Activated CD4-positive, alpha-beta T cell treated with anti-CD3 and anti-CD28 coated beads for 36 hours (primary cell): ENCODE measurements at regions of chr9 and their contacts with region 1.

Region 1: DNA sequence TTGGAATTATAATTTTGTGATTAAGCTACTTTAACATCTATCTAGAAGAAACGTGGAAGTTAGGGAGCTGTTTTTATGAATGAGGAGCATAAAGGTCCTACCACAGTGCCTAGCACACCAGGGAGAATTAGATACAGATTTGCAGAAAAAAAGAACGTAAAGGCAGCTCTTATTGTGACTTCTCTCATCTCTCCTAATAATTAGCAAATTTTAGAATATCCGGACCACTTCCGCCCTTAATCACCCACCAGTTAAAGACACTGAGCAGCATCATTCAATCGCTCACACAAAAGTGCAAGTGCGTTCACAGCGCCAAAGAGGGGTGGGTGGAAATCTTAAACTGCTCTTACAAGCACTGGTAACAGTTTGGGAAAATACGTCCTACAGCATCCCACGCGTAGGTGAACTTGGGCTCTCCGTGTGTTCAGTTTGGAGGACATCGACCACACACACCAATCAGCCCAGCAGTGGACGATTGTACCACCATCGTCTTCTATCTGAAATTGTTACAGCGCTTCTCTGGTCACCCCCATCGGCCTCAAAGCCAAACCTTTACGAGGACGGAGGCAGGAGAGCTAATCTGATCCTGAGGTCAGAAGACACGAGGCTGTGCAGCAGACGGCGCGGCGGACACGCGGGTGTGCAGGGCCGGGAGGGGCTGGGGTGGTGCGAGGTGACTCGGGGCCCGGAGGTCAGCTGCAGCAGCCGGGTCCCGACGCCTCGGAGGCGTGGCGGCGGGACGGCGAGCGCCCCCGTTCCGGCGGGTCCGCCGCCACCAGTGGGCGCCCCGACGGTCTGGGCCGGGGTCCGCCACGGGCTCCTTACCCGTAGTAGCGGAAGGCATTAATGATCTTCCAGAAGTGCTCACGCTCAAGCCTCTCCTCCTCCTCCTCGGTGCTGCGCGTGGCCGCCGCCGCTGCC is 646 bp downstream of the CARNMT1 start:
- DNase-seq: peak; percentile 72
- ATAC-seq: peak; percentile 34
- H3K4me3 Mint-ChIP-seq: peak overlapping the region; percentile 98
- H3K27ac Mint-ChIP-seq: peak overlapping the region; percentile 99
- H3K4me1 Mint-ChIP-seq: peaks cover 33% of the 10 kb centered on the region
- H3K27me3 Mint-ChIP-seq: no peaks in the 10 kb centered on the region

Region 2: DNA sequence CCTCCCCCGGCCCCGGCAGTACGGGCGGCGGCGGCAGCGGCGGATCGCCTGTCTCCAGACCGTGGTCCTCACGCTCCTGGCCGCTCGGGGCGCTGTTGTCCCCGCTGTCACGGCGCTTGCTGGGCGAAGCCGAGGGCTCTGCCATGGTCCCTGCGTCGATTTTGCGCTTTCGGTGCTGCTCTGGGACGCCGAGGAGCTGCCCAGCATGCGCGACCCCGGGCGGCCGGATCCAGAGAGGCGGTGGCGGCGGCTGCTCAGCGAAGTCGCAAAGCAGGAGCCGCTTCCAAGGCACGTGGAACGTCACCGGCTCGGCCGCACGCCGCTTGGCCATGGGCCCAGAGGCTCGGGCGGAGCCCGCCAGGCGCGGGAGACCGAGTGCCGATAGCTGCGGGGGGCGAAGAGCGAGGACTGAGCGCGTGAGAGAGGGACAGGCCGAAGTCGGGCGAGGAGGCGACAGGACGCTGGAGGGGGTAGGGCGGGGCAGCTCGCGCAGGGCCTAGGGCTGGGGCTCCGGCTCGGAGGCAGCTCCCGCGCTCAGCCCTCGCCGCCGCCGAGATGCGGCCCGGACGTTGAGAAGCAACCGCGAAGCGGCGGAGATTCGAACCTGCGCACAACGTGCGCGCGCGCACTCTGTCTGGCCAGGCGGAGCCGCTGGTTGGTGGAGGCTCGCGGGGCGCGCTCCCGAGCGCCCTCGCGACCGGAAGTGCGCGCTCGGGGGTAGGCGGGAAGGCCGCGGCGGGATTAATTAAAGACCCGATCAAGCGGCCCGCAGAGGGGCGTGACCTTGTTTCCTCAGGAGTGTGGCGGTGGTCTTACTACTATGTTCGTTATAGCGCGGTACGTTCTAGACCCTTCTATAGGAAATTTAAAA is 74.9 kb before region 1 on chr9 and contains the start of gene C9orf40:
- CTCF ChIA-PET with region 1: interaction called, 12 read pairs
- POLR2A ChIA-PET with region 1: interaction called, 8 read pairs
- intact Hi-C with region 1: loop called (anchors 1 to 2 kb)
- DNase-seq: peak; percentile 95
- ATAC-seq: peak; percentile 93
- H3K4me3 Mint-ChIP-seq: peak within 1 kb of the TSS; percentile 93
- H3K27ac Mint-ChIP-seq: peak within 1 kb of the TSS; percentile 96
- H3K4me1 Mint-ChIP-seq: peaks cover 28% of the 10 kb centered on the region
- H3K27me3 Mint-ChIP-seq: no peaks in the 10 kb centered on the region
- total RNA-seq, gene C9orf40: 14.0 to 19.7 TPM

Region 3: DNA sequence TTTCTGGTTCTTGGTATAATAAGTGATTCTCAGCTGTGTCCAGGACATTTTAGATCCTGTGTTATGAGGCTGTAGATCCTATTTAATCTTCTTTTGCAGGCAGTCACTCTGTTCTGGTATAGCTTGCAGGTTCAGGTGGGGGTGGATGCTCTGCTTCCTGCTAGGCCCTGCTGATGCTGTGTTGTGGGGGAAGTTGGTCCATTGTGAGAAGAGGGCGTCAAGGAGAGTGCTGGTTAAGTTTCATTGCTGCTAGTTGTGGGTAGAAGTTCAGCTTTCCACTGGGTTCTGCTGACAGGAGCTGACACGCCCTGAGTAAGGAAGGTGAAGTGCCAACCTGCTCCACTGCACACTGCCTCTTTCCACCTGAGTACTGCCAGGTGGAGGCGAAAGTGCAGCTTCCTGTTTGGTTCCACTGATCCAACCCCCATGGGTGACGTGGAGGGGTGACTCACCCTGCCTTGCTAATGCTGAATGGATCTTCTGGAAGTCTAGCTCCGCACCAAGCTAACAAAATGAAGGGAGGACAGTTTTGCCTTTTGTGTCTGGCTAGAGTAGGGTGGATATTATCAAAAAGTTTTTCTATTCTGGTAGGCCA is 44.2 kb after region 1 on chr9:
- CTCF ChIA-PET with region 1: interaction called, 4 read pairs
- POLR2A ChIA-PET with region 1: interaction called, 4 read pairs
- intact Hi-C with region 1: loop called (anchors 1 to 2 kb)
- DNase-seq: peak; percentile 86
- ATAC-seq: peak; percentile 96
- H3K4me3 Mint-ChIP-seq: peak overlapping the region; percentile 11
- H3K27ac Mint-ChIP-seq: peak overlapping the region; percentile 75
- H3K4me1 Mint-ChIP-seq: peaks cover 37% of the 10 kb centered on the region
- H3K27me3 Mint-ChIP-seq: no peaks in the 10 kb centered on the region

Region 4: DNA sequence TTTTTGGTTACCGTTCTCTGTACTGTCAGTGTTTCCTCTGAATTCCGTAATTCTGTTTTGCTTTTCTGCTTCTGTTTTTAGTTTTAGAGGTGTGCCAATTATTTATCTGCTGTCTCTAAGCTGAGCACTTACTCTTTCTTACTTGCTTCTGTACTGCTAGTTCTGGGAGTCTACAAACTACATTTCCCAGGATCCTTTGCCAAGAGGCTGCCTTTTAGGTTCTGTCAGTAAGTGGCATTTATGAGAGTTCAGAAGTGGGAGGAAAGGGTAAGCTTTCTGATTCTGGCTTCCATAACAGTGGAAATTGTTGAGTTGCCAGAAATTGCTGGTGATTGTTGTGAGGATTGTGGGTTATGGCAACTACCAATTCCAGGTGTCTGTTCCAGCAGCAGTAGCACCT is 163.3 kb after region 1 on chr9:
- CTCF ChIA-PET with region 1: interaction called, 3 read pairs
- POLR2A ChIA-PET with region 1: no interaction called
- intact Hi-C with region 1: loop called in 1 of 2 experiments (anchors 2 kb)
- DNase-seq: no peak
- ATAC-seq: peak; percentile 69
- H3K4me3 Mint-ChIP-seq: no peak overlapping the region
- H3K27ac Mint-ChIP-seq: no peak overlapping the region
- H3K4me1 Mint-ChIP-seq: peaks cover 9% of the 10 kb centered on the region
- H3K27me3 Mint-ChIP-seq: no peaks in the 10 kb centered on the region